GM10248 (cell line): ENCODE measurements at regions of chr12 and their contacts with region 1.

Region 1: GRCh38 chr12:57865090-57865751 is 18.7 kb upstream of the CTDSP2 start:
- DNase-seq: peak; percentile 69
- CTCF ChIP-seq: no peak

Region 2: DNA sequence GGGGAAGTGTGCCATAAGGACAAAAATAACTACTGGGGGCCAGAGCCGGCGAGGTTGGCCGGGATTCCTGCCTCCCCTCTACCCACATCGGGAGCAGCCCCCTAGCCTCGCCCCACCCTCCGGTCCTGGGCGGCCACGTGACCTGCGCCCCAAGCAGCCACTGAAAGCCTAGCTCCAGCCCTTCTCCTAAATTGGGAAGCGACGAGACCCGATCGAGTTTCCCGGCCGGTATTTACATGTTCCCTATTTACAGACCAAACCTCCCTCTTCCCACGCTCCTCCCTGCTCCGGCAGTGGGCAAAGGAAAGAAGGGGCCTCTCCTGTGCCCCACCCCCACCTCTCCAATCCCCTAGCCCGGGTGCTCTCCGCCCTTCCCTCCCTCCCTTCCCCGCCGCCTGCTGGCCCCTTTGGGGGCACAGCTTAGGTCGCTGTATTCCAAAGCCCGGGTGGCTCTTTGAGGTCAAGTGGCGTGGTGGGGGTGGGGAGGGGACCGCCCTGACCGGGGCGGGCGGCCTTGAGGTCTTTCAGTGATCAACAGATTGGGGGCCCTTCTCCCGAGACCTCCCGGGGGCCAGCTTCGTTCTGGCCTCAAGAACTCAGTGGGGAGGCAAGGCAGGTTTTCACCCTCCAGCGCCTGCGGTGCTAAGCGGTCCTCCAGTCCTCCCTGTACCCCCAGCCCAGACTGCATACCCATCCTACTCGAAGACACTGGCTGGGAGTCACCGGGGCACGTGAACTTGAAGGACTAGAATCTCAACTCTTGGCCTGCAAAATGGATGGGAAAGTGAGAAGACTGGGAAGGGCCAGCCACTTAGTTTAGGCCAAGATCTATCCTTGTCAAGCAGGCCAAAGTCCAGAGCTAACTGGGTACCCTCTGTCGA is 12.4 kb before region 1 on chr12:
- CTCF ChIA-PET with region 1: interaction called, 10 read pairs
- POLR2A ChIA-PET with region 1: no interaction called
- DNase-seq: no peak
- CTCF ChIP-seq: no peak

Region 3: DNA sequence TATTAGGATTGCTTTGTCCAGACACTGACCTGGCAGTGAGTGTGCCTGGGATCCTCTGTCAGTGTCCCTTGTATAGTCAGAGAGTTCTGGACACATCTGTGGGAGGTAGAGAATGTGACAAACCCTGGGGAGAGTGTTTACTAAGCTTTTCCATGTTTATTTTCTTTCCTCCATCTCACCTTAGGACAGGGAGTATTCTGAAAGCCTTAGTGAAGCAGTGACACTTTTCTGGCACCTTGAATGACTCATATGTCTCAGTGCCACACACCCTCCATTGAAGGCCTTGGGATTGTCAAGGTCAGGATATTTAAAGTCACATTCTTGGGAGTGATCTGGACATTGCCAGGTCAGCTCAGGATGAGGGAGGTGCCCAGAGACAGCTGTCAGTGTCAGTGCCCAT is 16.3 kb after region 1 on chr12:
- CTCF ChIA-PET with region 1: interaction called, 18 read pairs
- POLR2A ChIA-PET with region 1: no interaction called
- DNase-seq: no peak
- CTCF ChIP-seq: no peak